Left ventricle myocardium inferior (tissue), 1 donor: ENCODE measurements at regions of chr2 and their contacts with region 1.

Region 1: GRCh38 chr2:144320491-144320890 is 199.4 kb downstream of the ZEB2 start:
- DNase-seq: no peak
- H3K4me3 ChIP-seq: no peak overlapping the region
- H3K27ac ChIP-seq: no peak overlapping the region
- H3K4me1 ChIP-seq: peaks cover 6% of the 10 kb centered on the region
- H3K27me3 ChIP-seq: no peaks in the 10 kb centered on the region
- CTCF ChIP-seq: no peak

Region 2: DNA sequence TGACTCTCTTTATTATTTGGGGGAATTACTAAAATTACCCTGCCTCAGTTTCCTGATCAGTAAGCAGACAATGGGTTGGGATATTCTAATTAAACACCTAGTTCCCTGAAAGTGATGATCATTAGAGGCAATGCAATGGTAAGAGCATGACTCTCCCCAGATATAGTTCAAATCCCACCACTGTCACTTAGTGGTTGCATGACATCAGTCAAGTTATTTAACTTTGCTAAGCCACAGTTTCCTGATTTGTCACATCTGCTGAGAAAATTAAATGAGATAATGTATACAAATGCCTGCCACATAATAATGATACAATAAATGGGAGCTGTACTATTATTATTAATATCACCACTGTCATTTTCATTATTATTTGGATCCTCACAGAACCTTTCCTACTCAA is 169.5 kb after region 1 on chr2:
- intact Hi-C with region 1: no loop called
- DNase-seq: no peak
- H3K4me3 ChIP-seq: no peak overlapping the region
- H3K27ac ChIP-seq: no peak overlapping the region
- H3K4me1 ChIP-seq: peaks cover 86% of the 10 kb centered on the region
- H3K27me3 ChIP-seq: no peaks in the 10 kb centered on the region
- CTCF ChIP-seq: no peak

Region 3: GRCh38 chr2:144516981-144517865 is 196.7 kb after region 1 on chr2:
- intact Hi-C with region 1: loop called (anchors 10 kb)
- DNase-seq: peak; percentile 65
- H3K4me3 ChIP-seq: peak overlapping the region; percentile 85
- H3K27ac ChIP-seq: peak overlapping the region; percentile 98
- H3K4me1 ChIP-seq: peaks cover 61% of the 10 kb centered on the region
- H3K27me3 ChIP-seq: peaks cover 6% of the 10 kb centered on the region
- CTCF ChIP-seq: no peak